ENCODE measurements at regions of chr5 and their contacts with region 1.

Region 1: GRCh38 chr5:671459-672328 is 21.5 kb downstream of the TPPP start:
- DNase-seq: peak; percentile 74 to 81
- H3K4me3 ChIP-seq: no peak overlapping the region
- H3K4me3 Mint-ChIP-seq: no peak overlapping the region
- H3K27ac Mint-ChIP-seq: peak overlapping the region; percentile 59
- H3K4me1 ChIP-seq: peaks cover 14% of the 10 kb centered on the region
- H3K4me1 Mint-ChIP-seq: no peaks in the 10 kb centered on the region
- H3K27me3 ChIP-seq: no peaks in the 10 kb centered on the region; the same call in 1 of the 2 replicates
- H3K27me3 Mint-ChIP-seq: no peaks in the 10 kb centered on the region
- CTCF ChIP-seq: peak; percentile 90 to 95

Region 2: DNA sequence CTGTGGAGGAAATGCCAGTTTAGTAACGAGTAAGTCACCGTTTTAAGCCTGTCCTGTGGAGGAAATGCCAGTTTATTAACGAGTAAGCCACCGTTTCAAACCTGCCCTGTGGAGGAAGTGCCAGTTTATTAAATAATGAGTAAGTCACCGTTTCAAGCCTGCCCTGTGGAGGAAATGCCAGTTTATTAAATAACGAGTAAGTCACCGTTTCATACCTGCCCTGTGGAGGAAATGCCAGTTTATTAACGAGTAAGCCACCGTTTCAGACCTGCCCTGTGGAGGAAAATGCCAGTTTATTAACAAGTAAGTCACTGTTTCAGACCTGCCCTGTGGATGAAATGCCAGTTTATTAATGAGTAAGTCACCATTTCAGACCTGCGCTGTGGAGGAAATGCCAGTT is 419.1 kb before region 1 on chr5:
- CTCF ChIA-PET with region 1: no interaction called
- POLR2A ChIA-PET with region 1: no interaction called
- intact Hi-C with region 1: no loop called
- DNase-seq: no peak
- H3K4me3 ChIP-seq: no peak overlapping the region
- H3K4me3 Mint-ChIP-seq: no peak overlapping the region
- H3K27ac Mint-ChIP-seq: no peak overlapping the region
- H3K4me1 ChIP-seq: no peaks in the 10 kb centered on the region
- H3K4me1 Mint-ChIP-seq: no peaks in the 10 kb centered on the region
- H3K27me3 ChIP-seq: no peaks in the 10 kb centered on the region
- H3K27me3 Mint-ChIP-seq: no peaks in the 10 kb centered on the region
- CTCF ChIP-seq: no peak

Region 3: DNA sequence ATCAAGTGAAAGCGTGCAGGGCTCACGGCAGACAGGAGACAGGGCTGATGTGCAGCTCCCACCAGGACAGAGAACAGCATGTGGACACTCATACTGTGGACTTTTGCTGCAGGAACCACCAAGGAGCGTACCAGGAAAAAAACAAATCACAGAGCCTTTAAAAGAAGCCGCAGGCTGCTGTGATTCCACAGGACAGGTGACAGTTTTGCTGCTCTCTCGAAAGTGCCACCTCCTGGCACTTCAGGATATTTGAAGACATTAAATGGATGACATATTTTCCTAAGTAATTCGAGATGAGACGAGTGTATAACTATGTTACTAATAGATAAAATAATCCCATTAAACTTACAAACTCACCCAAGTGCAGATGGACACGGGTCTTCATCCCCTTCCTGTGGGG is 149.8 kb after region 1 on chr5:
- CTCF ChIA-PET with region 1: no interaction called
- POLR2A ChIA-PET with region 1: no interaction called
- intact Hi-C with region 1: loop called (anchors 5 kb)
- DNase-seq: no peak
- H3K4me3 ChIP-seq: no peak overlapping the region
- H3K4me3 Mint-ChIP-seq: no peak overlapping the region
- H3K27ac Mint-ChIP-seq: no peak overlapping the region
- H3K4me1 ChIP-seq: no peaks in the 10 kb centered on the region
- H3K4me1 Mint-ChIP-seq: no peaks in the 10 kb centered on the region
- H3K27me3 ChIP-seq: peaks cover 1% of the 10 kb centered on the region; the same call in 1 of the 2 replicates
- H3K27me3 Mint-ChIP-seq: peaks cover 19% of the 10 kb centered on the region
- CTCF ChIP-seq: no peak

Region 4: DNA sequence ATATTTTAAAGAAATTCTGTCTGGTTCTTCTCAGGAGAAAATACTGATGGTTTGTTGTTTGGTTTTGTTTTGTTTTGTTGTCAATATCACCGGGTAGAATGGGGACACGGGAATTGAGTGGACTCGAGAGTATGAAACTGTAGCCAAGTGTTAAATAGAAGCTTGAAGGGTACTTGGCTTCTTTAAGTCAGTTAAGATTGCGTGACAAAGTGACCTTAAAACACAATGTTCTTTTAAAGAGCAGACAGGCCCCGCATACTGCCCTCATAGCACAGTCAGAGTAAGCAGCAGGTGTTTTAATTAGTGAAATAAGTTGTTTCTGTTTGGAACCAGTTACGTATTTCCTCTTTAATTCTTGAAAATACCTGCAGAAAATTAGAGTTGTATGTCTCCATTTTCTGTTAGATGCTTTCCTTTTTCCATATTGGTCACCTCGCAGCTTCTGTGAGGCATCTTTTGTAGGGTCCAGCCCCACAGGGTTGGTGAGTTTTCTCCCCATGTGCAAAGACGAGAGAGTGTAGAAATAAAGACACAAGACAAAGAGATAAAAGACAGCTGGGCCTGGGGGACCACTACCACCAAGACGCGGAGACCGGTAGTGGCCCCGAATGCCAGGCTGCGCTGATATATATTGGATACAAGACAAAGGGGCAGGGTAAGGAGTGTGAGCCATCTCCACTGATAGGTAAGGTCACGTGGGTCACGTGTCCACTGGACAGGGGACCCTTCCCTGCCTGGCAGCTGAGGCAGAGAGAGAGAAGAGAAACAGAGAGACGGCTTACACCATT is 230.6 kb after region 1 on chr5:
- CTCF ChIA-PET with region 1: no interaction called
- POLR2A ChIA-PET with region 1: no interaction called
- intact Hi-C with region 1: loop called (anchors 2 kb)
- DNase-seq: no peak
- H3K4me3 ChIP-seq: no peak overlapping the region
- H3K4me3 Mint-ChIP-seq: no peak overlapping the region
- H3K27ac Mint-ChIP-seq: no peak overlapping the region
- H3K4me1 ChIP-seq: no peaks in the 10 kb centered on the region
- H3K4me1 Mint-ChIP-seq: no peaks in the 10 kb centered on the region
- H3K27me3 ChIP-seq: no peaks in the 10 kb centered on the region
- H3K27me3 Mint-ChIP-seq: no peaks in the 10 kb centered on the region
- CTCF ChIP-seq: no peak

Measured in Caco-2 (cell line).